SK-N-SH (cell line): ENCODE measurements at regions of chr7 and their contacts with region 1.

Region 1: DNA sequence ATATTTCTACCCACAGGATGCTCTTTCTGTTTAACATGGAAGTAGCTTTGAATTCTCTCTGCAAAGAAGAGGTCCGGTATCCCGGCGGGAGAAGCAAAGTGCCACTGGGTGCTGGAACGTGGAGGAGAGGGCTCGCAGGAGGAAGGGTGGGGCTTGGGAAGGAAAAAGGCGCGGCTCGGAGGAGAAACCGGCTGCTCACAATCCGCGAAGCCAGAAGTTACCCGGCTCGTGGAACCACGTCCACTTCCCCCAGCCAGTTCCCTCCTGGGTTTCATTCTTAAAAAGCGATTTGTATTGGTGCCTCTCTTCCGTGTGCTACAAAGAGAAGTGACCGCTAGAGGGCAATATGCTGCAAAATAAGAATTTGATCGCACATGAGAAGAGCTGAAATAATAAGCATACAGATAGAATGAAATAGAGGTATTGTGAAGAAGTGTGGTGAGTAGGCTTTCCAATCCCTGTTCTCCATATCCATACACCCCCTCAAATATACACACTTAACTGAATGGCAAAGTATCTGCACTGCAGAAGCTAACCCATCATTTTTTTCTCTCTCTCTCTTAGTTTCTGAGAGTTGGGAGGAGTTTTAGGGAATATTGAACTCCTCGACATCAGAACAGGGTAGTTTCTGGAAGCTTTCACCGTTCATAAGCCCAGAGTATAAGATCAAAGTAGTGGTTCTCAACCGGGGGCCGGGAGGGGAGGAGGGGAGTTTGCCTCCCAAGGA is 31.1 kb downstream of the TRIL start:
- DNase-seq: peak; percentile 72
- H3K4me3 ChIP-seq: peak overlapping the region; percentile 55 to 65
- H3K27ac ChIP-seq: peak overlapping the region in 1 of 2 experiments; percentile 45; a peak in 1 of 4 replicates
- H3K4me1 ChIP-seq: peaks cover 0 to 22% of the 10 kb centered on the region in 2 experiments; a peak in 3 of 4 replicates
- H3K27me3 ChIP-seq: 0 out of 2 replicates have a peak, but pooled peaks cover 15% of the 10 kb centered on the region
- CTCF ChIP-seq: peak; percentile 99
- EP300 ChIP-seq: peak in 1 of 2 experiments; percentile 42; a peak in 1 of 4 replicates
- RAD21 ChIP-seq: peak; percentile 99

Region 2: DNA sequence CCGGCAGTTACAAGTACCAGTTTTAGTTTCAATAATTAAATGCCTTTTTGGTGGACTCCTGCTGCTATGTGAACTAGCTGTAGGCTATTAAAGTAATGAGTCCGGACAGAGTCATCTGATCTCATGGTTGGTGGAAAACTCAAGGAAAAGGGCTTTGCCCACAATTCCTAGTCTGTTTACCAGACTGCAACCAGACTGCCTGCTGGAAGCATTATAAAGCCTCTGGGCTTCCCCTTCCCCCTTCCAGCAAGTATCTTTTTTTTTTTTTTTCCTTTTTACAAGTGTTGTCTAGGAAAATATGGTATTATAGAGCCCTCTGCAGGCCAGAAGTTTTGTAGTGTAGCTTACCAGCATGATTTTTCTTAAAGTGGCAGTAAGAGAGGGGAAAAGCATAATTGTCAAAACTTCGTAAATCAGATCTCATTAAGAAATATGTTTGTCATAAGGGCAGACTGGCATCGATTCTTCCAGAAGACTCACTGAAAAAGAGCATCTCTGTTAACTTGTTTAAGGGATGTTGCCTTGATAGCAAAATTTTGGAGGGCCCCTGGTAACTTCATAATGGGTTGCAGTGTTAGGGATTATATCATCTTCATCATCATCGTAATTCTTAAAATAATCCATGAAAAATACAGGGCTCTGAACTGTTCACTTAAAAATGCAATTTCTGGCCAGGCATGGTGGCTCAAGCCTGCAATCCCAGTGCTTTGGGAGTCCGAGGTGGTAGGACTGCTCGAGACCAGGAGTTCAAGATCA is 1005.8 kb before region 1 on chr7:
- CTCF ChIA-PET with region 1: no interaction called
- POLR2A ChIA-PET with region 1: no interaction called
- DNase-seq: peak; percentile 73
- H3K4me3 ChIP-seq: peak overlapping the region in 1 of 2 experiments; percentile 17; a peak in 1 of 4 replicates
- H3K27ac ChIP-seq: peak overlapping the region in 1 of 2 experiments; percentile 43; a peak in 1 of 4 replicates
- H3K4me1 ChIP-seq: peaks cover 0 to 8% of the 10 kb centered on the region in 2 experiments; a peak in 2 of 4 replicates
- H3K27me3 ChIP-seq: no peaks in the 10 kb centered on the region
- CTCF ChIP-seq: peak; percentile 91
- EP300 ChIP-seq: no peak
- RAD21 ChIP-seq: peak; percentile 92

Region 3: DNA sequence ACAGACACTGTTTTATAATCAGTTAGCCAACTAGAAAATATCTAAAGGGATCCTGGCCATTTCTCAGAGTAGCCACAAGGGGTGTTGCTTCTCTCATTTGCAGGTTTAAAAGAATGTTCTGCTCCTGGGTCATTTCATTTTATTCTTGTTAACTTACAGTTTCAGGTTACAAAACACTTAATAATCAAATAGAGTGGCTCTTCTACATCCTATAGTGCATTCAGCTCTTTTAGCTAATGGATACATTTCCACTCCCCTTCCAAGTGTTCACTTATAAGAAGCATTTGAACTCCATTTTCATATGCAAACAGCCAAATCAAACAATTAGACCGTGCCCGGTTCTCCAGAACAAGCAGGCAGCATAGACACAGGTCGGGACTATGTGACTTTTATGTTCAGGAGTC is 86.4 kb before region 1 on chr7:
- CTCF ChIA-PET with region 1: no interaction called
- POLR2A ChIA-PET with region 1: no interaction called
- DNase-seq: peak; percentile 50
- H3K4me3 ChIP-seq: no peak overlapping the region
- H3K27ac ChIP-seq: no peak overlapping the region
- H3K4me1 ChIP-seq: peaks cover 0 to 14% of the 10 kb centered on the region in 2 experiments; a peak in 2 of 4 replicates
- H3K27me3 ChIP-seq: peaks cover 23% of the 10 kb centered on the region
- CTCF ChIP-seq: peak; percentile 59
- EP300 ChIP-seq: no peak
- RAD21 ChIP-seq: peak; percentile 25; the same call in 1 of the 2 replicates

Region 4: DNA sequence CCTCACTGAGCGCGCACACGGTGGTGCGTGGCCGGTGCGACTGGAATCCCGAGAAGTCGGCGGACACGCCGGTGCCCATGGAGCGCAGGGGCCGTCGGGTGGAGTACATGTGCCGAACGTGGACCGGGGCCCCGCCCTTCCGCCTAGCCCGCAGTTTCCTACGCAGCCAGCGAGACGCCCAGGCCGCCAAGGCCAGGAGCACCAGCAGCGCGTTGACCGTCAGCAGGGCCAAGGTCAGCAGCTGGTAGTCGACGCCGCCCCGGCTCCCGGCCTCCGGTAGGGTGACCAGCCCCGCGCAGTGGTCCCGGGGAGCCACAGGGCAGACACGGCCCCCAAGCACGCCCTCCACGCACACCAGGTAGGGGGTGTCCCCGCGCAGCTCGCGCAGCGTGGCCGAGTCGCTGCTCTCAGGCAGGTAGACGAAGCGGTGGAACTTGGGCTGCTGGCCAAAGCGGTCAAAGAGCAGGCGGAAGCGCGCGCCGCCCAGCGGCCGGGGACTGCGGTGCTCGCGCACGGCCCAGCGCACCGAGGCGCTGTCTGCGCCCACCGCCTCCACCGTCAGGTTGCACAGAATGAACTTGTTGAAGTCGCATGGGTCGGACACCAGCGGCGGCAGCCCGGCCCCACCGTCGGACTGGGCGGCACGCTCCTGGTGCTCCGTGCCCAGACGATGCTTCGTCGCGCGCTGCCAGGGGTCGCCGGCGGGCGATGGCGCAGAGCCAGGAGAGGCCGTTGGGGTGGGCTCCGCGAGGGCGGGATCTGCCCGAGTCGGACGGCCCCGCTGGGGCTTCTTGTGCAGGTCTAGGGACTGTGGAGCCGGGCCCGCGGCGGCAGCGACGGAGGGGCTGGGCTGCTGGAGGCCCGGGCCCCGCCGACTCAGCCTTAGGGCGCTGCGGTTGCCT is 28.9 kb after region 1 on chr7:
- CTCF ChIA-PET with region 1: interaction called, 1,040 read pairs
- POLR2A ChIA-PET with region 1: interaction called, 25 read pairs
- DNase-seq: peak; percentile 87
- H3K4me3 ChIP-seq: peak overlapping the region; percentile 52 to 59
- H3K27ac ChIP-seq: peak overlapping the region in 1 of 2 experiments; percentile 100; a peak in 2 of 4 replicates
- H3K4me1 ChIP-seq: peaks cover 11 to 66% of the 10 kb centered on the region in 2 experiments
- H3K27me3 ChIP-seq: peaks cover 36% of the 10 kb centered on the region
- CTCF ChIP-seq: peak; percentile 32
- EP300 ChIP-seq: no peak
- RAD21 ChIP-seq: peak; percentile 63

Region 5: GRCh38 chr7:29017713-29018112 is 90.7 kb after region 1 on chr7:
- CTCF ChIA-PET with region 1: interaction called, 12 read pairs
- POLR2A ChIA-PET with region 1: no interaction called
- DNase-seq: no peak
- H3K4me3 ChIP-seq: no peak overlapping the region
- H3K27ac ChIP-seq: no peak overlapping the region
- H3K4me1 ChIP-seq: peaks cover 4 to 10% of the 10 kb centered on the region in 2 experiments; a peak in 2 of 4 replicates
- H3K27me3 ChIP-seq: no peaks in the 10 kb centered on the region
- CTCF ChIP-seq: no peak
- EP300 ChIP-seq: no peak
- RAD21 ChIP-seq: no peak

Region 6: GRCh38 chr7:29105752-29106668 is 179.0 kb after region 1 on chr7:
- CTCF ChIA-PET with region 1: interaction called, 1,647 read pairs
- POLR2A ChIA-PET with region 1: interaction called, 8 read pairs
- DNase-seq: peak; percentile 43
- H3K4me3 ChIP-seq: no peak overlapping the region; a peak in 1 of 4 replicates
- H3K27ac ChIP-seq: no peak overlapping the region; a peak in 1 of 4 replicates
- H3K4me1 ChIP-seq: peaks cover 0 to 16% of the 10 kb centered on the region in 2 experiments; a peak in 1 of 4 replicates
- H3K27me3 ChIP-seq: peaks cover 10% of the 10 kb centered on the region
- CTCF ChIP-seq: peak; percentile 94
- EP300 ChIP-seq: no peak
- RAD21 ChIP-seq: peak; percentile 98

Region 7: DNA sequence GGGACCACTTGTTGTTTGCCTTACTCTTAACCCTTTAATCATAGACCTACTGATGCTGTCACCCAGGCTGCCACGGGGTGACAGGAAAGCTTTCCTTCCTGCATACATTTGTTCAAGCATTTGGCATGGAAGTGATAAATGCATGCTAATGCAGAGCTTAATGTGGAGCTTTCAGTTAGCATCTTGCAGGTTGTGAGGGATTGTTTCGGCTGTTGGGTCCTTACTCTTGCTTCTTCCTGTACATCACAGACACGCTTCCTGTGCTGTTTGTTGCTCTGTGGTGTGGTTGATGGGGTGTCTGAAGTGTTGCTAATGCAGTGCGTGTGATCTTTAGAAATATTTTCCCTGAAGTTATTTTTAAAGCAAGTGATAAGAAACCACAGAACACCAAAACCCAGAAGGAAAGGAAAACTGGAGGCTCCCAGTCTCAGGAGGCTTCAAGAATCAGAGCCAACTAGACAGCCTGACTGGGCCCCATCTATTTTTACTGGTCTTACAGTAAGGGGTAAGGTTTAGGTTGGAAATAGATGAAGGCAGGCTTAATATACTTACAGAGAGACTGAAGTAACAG is 410.6 kb after region 1 on chr7:
- CTCF ChIA-PET with region 1: interaction called, 93 read pairs
- POLR2A ChIA-PET with region 1: no interaction called
- DNase-seq: no peak
- H3K4me3 ChIP-seq: no peak overlapping the region
- H3K27ac ChIP-seq: no peak overlapping the region
- H3K4me1 ChIP-seq: peaks cover 8 to 11% of the 10 kb centered on the region in 2 experiments; a peak in 3 of 4 replicates
- H3K27me3 ChIP-seq: 0 out of 2 replicates have a peak, but pooled peaks cover 4% of the 10 kb centered on the region
- CTCF ChIP-seq: no peak
- EP300 ChIP-seq: no peak
- RAD21 ChIP-seq: no peak

Region 8: DNA sequence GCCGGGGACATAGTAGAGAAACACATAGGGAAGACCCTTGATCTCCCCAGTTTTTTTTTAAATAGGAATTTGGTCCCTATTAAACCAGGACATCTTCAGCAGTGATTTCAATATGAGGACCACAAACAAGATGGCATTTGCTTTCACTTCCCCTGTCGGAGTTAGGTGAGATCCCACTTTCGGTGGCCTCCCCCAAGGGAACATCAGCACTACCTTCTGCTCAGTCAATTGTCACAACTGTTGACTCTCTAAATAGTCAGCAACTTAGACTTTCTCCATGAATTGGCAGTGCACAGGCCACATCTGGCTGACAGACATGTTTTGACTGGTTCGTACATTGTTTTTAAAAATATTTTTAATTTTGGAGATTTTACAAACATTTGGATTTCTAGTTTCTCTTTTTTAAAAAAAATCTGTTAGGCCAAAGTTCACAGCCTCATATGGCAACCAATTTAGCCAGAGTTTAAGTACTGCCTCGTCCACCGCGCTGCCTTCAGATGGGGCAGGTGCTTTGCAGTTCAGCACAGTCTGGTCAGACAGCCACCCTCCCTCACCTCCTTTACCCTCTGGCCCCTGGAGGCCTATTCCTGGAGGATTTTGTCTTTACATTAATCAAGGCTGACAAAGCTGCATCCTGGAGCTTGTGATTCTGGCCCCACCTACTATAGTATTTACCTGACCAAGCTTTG is 497.4 kb after region 1 on chr7:
- CTCF ChIA-PET with region 1: interaction called, 67 read pairs
- POLR2A ChIA-PET with region 1: no interaction called
- DNase-seq: no peak
- H3K4me3 ChIP-seq: no peak overlapping the region
- H3K27ac ChIP-seq: no peak overlapping the region
- H3K4me1 ChIP-seq: no peaks in the 10 kb centered on the region
- H3K27me3 ChIP-seq: peaks cover 4% of the 10 kb centered on the region; the same call in 1 of the 2 replicates
- CTCF ChIP-seq: no peak
- EP300 ChIP-seq: no peak
- RAD21 ChIP-seq: no peak

Region 9: GRCh38 chr7:29968683-29969395 is 1041.8 kb after region 1 on chr7:
- CTCF ChIA-PET with region 1: no interaction called
- POLR2A ChIA-PET with region 1: no interaction called
- DNase-seq: no peak
- H3K4me3 ChIP-seq: no peak overlapping the region
- H3K27ac ChIP-seq: no peak overlapping the region; a peak in 1 of 4 replicates
- H3K4me1 ChIP-seq: peaks cover 0 to 4% of the 10 kb centered on the region in 2 experiments; a peak in 1 of 4 replicates
- H3K27me3 ChIP-seq: no peaks in the 10 kb centered on the region
- CTCF ChIP-seq: no peak
- EP300 ChIP-seq: no peak
- RAD21 ChIP-seq: no peak